CD8-positive, alpha-beta T cell (primary cell): ENCODE measurements at regions of chr1 and their contacts with region 1.

Region 1: DNA sequence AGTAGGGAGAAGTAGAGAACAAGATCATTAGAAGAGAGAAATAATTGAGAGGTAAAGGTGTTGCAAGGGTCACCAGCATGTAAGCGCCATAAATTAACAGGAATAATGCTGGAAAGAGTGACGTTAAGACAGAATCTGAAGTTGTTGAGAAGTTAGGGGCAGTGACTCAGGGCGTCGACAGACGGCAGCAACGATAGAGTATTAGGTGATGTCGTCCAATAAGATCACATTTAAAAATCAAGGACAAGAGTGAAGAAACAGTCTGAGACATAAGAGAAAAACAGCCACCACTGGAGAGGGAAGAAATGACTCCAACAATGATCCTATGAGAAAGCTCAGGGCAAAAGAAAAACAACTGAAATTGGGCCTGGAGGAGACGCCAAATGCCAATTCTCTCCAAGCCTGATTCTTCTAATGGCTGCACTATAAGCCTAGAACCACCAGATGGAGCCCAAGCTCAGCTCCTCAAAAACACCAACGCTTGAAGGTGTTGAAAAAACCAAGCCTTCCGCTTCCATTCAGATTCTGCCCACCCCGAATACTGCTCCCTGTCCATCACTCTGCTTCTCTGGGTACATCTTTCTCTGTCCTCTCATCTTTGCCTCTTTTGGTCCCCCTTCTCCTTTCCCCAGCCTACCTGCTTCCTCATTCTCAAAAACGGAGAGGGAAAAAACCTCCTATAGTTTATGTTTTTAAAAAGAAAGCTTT is 70.0 kb downstream of the LUZP1 start:
- DNase-seq: peak; percentile 37 to 83 (median 63)
- ATAC-seq: peak; percentile 51
- H3K4me3 ChIP-seq: no peak overlapping the region
- H3K4me3 Mint-ChIP-seq: peak overlapping the region; percentile 44
- H3K27ac ChIP-seq: no peak overlapping the region
- H3K27ac Mint-ChIP-seq: peak overlapping the region; percentile 58
- H3K4me1 ChIP-seq: peaks cover 18% of the 10 kb centered on the region
- H3K4me1 Mint-ChIP-seq: peaks cover 46% of the 10 kb centered on the region
- H3K27me3 ChIP-seq: no peaks in the 10 kb centered on the region
- H3K27me3 Mint-ChIP-seq: no peaks in the 10 kb centered on the region
- CTCF ChIP-seq: peak; percentile 81

Region 2: DNA sequence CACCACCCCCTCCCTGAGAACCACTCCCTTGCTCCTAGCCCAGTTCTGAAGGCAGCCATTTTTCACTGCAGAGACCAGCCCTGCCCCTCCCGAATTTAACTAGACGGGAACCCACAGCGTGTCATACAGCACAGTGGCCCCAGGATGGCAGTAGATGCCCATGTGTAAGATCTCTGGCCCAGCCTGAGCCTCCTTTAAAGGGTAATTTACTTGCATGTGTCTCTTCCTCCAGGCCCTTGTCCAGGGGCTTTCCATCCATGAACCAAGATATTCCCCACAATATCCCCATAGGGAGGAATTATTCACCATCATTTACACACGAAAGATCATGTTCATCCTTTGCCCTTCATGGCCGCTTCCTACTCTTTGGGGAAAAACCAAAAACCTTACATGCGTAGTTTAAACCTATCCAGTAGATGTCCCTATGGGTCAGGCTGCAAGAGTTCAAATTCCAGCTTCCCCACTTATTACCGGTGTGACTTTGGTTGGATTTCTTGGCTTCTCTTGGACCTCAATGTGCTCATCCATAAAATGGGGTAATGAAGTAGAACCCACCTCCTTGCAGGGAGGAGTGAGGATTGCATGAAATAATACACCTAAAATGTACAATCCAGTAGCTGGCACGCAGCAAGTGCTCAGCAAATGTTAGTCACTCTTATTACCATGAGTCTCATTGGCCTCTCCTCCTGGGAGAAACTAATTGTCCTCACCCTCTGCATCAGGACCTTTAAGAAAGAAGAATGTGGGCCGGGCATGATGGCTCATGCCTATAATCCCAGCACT is 122.0 kb before region 1 on chr1:
- CTCF ChIA-PET with region 1: interaction called, 4 read pairs
- POLR2A ChIA-PET with region 1: no interaction called
- intact Hi-C with region 1: loop called (anchors 1 kb)
- DNase-seq: peak; percentile 15 to 65 (median 44)
- ATAC-seq: peak; percentile 93
- H3K4me3 ChIP-seq: no peak overlapping the region
- H3K4me3 Mint-ChIP-seq: no peak overlapping the region
- H3K27ac ChIP-seq: no peak overlapping the region
- H3K27ac Mint-ChIP-seq: no peak overlapping the region
- H3K4me1 ChIP-seq: no peaks in the 10 kb centered on the region
- H3K4me1 Mint-ChIP-seq: no peaks in the 10 kb centered on the region
- H3K27me3 ChIP-seq: no peaks in the 10 kb centered on the region
- H3K27me3 Mint-ChIP-seq: peaks cover 40% of the 10 kb centered on the region
- CTCF ChIP-seq: peak; percentile 49

Region 3: GRCh38 chr1:23114424-23115079 is 15.9 kb after region 1 on chr1:
- CTCF ChIA-PET with region 1: interaction called, 29 read pairs
- POLR2A ChIA-PET with region 1: interaction called, 4 read pairs
- intact Hi-C with region 1: no loop called
- DNase-seq: peak in 1 of 9 experiments; percentile 18
- ATAC-seq: no peak
- H3K4me3 ChIP-seq: no peak overlapping the region
- H3K4me3 Mint-ChIP-seq: no peak overlapping the region
- H3K27ac ChIP-seq: no peak overlapping the region
- H3K27ac Mint-ChIP-seq: peak overlapping the region; percentile 60
- H3K4me1 ChIP-seq: peaks cover 34% of the 10 kb centered on the region
- H3K4me1 Mint-ChIP-seq: peaks cover 65% of the 10 kb centered on the region
- H3K27me3 ChIP-seq: no peaks in the 10 kb centered on the region
- H3K27me3 Mint-ChIP-seq: no peaks in the 10 kb centered on the region
- CTCF ChIP-seq: no peak

Region 4: GRCh38 chr1:23149114-23149513 is 50.5 kb after region 1 on chr1:
- CTCF ChIA-PET with region 1: interaction called, 5 read pairs
- POLR2A ChIA-PET with region 1: no interaction called
- intact Hi-C with region 1: loop called in 1 of 2 experiments (anchors 5 kb)
- DNase-seq: no peak
- ATAC-seq: no peak
- H3K4me3 ChIP-seq: no peak overlapping the region
- H3K4me3 Mint-ChIP-seq: no peak overlapping the region
- H3K27ac ChIP-seq: no peak overlapping the region
- H3K27ac Mint-ChIP-seq: no peak overlapping the region
- H3K4me1 ChIP-seq: peaks cover 14% of the 10 kb centered on the region
- H3K4me1 Mint-ChIP-seq: peaks cover 42% of the 10 kb centered on the region
- H3K27me3 ChIP-seq: no peaks in the 10 kb centered on the region
- H3K27me3 Mint-ChIP-seq: no peaks in the 10 kb centered on the region
- CTCF ChIP-seq: no peak

Region 5: GRCh38 chr1:23177438-23178380 is 79.1 kb after region 1 on chr1:
- CTCF ChIA-PET with region 1: interaction called, 662 read pairs
- POLR2A ChIA-PET with region 1: interaction called, 5 read pairs
- intact Hi-C with region 1: no loop called
- DNase-seq: peak in 8 of 9 experiments; percentile 13 to 74 (median 46)
- ATAC-seq: peak; percentile 80
- H3K4me3 ChIP-seq: peak overlapping the region; percentile 41 to 50
- H3K4me3 Mint-ChIP-seq: peak overlapping the region; percentile 76
- H3K27ac ChIP-seq: no peak overlapping the region
- H3K27ac Mint-ChIP-seq: no peak overlapping the region
- H3K4me1 ChIP-seq: peaks cover 4% of the 10 kb centered on the region
- H3K4me1 Mint-ChIP-seq: peaks cover 13% of the 10 kb centered on the region
- H3K27me3 ChIP-seq: peaks cover 0 to 3% of the 10 kb centered on the region in 2 experiments
- H3K27me3 Mint-ChIP-seq: peaks cover 13% of the 10 kb centered on the region
- CTCF ChIP-seq: no peak

Region 6: DNA sequence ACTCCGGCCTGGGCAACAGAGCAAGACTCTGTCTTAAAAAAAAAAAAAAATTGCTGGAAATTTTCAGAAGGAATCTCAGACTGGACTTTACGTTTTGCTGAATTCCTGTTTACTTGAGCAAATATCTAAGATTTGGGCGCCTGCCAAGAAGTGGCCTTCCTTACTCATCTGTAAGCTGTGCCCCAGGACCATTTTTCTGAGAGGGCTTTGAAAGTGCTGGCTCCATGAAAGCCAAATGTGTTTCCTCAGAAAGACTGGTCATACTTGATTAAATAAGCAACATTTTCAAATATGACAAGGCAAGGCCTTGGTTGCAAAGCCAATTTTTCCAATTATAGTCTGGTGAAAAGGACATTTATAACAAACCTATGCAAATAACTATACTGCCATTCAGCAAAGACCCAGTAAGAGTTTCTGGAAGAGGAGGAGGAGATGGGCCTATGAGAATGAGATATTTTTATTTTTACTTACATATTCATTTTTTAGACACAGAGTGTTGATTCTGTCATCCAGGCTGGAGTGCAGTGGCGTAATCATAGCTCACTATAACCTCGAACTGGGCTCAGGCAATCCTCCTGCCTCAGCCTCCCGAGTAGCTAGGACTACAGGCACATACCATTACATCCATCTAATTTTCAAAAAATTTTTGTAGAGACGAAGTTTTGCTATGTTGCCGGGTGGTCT is 175.0 kb after region 1 on chr1:
- CTCF ChIA-PET with region 1: no interaction called
- POLR2A ChIA-PET with region 1: no interaction called
- intact Hi-C with region 1: loop called in 1 of 2 experiments (anchors 10 kb)
- DNase-seq: no peak
- ATAC-seq: no peak
- H3K4me3 ChIP-seq: no peak overlapping the region
- H3K4me3 Mint-ChIP-seq: no peak overlapping the region
- H3K27ac ChIP-seq: no peak overlapping the region
- H3K27ac Mint-ChIP-seq: no peak overlapping the region
- H3K4me1 ChIP-seq: no peaks in the 10 kb centered on the region
- H3K4me1 Mint-ChIP-seq: no peaks in the 10 kb centered on the region
- H3K27me3 ChIP-seq: peaks cover 4 to 11% of the 10 kb centered on the region in 2 experiments
- H3K27me3 Mint-ChIP-seq: peaks cover 32% of the 10 kb centered on the region
- CTCF ChIP-seq: no peak